PC-3 (cell line): ENCODE measurements at regions of chr21 and their contacts with region 1.

Region 1: DNA sequence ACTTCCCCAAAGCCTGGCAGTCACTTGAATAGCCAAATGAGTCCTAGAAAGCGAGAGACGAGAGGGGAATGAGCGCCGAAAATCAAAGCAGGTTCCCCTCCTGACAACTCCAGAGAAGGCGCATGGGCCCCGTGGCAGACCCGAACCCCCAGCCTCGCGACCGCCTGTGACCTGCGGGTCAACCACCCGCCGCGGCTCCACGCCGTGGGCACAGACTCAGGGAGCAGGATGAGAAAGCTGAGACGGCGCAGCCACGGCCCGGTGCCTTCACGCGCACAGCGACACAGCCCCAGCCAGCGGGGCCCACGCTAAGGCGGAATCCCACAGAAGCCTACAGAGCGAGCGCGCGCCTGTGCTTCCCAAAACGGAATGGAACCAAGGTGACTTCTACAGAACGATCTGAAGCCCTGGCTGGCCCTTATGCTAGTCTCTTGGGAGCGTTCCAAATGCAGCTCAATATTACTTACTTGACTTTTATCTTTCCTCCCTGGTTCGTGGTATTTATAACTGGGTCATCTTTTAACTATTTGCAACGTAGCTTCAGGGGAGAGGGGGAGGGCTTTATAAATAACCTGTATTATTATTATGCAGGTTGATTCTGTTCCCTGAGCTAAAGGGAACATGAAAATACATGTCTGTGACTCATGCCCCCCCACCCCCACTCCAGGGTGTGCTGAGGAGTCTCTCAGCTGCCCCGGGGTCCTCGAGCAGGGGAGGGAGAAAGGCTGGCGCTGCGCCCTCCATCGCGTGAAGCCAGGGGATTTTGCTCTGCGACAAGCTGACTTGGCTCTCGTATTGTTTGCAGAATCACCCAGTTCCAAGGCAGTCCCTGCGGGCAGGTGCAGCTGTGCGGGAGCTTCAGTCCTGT is 1.7 kb downstream of the TSPEAR start:
- DNase-seq: peak; percentile 62
- ATAC-seq: peak; percentile 58
- H3K4me3 ChIP-seq: peak overlapping the region; percentile 29; the same call in 1 of the 2 replicates
- H3K27ac ChIP-seq: no peak overlapping the region
- H3K4me1 ChIP-seq: peaks cover 12% of the 10 kb centered on the region; the same call in 1 of the 2 replicates
- H3K27me3 ChIP-seq: peaks cover 11% of the 10 kb centered on the region; the same call in 1 of the 2 replicates
- CTCF ChIP-seq: no peak

Region 2: GRCh38 chr21:44492567-44493385 is 216.9 kb before region 1 on chr21:
- CTCF ChIA-PET with region 1: interaction called, 10 read pairs
- POLR2A ChIA-PET with region 1: no interaction called
- intact Hi-C with region 1: no loop called
- DNase-seq: no peak
- ATAC-seq: no peak
- H3K4me3 ChIP-seq: no peak overlapping the region
- H3K27ac ChIP-seq: no peak overlapping the region
- H3K4me1 ChIP-seq: no peaks in the 10 kb centered on the region
- H3K27me3 ChIP-seq: peaks cover 19% of the 10 kb centered on the region
- CTCF ChIP-seq: no peak